ENCODE measurements at regions of chr13 and their contacts with region 1.

Region 1: DNA sequence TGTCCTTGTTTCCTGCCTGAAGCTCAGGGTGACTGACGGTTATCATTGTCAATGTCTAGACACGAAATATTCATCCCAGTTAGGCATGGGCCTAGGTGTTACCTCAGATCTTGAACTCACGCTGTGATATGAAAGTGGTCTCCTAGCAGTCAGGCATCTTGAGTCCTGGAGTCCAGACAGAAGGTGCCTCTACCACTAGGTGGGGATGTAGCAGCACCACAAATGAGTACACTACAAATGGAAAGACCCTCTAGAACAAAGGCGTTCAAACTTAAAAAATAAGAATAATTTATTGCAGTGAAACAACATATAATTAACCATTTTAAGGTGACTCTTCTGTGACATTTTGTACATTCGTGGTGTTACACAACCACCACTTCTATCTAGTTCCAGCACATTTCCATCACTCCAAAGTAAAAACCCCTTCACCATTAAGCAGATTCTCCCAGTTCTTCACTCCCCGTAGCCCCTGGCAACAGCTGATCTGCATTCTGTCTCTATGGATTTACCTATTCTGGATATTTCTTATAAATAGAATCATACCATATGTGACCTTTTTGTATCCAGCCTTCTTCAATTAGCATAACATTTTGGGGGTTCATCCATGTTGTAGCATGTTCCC is 11.9 kb upstream of the FRY start:
- DNase-seq: peak; percentile 66 to 75
- H3K4me3 ChIP-seq: no peak overlapping the region
- H3K4me1 ChIP-seq: peaks cover 10% of the 10 kb centered on the region
- H3K27me3 ChIP-seq: no peaks in the 10 kb centered on the region

Region 2: DNA sequence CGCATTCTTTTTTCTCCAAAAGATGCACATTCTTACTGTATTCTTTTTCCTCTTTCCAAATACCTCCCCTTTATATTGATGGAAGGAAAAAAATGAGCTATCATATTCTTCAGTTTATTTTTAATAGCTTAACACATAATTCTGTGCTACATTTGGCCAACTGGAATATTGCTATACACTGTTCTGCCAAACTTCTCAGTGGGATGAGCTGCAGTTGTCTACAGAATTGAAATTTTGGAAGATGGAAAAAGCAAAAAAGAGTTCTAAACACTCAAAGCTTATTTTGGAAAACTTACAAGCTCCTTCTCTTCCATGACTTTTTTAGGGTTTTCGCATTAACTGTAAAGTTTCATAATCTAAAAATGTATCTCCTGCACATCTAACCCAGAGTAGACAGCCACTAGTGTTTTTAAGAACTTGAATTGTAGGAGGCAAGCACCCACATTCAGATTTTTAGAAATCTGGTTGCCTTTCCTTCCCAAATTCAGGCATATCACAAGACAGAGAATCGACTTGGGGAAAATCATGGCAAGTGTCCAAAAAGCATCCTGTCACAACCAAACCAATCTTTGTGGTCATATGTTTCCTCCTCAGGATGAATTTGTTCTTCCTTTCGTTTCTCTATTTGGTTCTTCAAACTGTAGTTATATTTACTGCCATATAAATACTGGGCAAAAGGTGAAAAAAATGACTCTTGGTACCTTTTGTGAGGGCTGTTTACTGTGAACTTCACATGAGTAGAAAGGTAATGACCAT is 99.6 kb before region 1 on chr13:
- in situ Hi-C with region 1: no loop called
- DNase-seq: no peak
- H3K4me3 ChIP-seq: no peak overlapping the region
- H3K4me1 ChIP-seq: no peaks in the 10 kb centered on the region
- H3K27me3 ChIP-seq: no peaks in the 10 kb centered on the region; the same call in 1 of the 2 replicates

Region 3: DNA sequence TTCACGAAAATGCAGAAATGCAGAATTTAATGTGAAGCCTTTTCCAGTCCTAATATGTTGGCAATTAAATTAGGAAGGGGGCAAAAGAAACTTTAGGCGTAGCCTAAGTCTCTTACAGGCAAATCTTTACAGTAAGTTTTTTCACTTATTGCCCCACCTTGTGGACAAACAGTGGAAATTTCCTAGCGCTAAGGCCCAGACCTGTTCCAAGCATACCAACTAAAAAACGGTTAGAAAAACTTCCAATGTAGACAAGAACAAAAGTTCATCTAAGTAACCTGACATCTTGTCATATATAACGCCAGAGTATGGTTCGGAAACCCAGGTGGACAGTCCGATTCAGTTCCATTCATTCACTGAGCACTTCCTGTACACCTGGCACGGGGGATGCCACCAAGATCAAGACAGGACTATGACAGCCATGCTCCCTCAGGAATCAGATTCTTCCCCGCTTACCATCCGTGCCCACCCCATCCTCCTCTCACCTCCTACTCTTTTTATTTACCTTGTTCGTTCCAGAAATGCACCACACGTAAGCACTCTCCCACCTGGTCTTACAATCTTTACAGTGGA is 290.5 kb after region 1 on chr13:
- in situ Hi-C with region 1: loop called (anchors 5 kb)
- DNase-seq: peak; percentile 32 to 72
- H3K4me3 ChIP-seq: no peak overlapping the region
- H3K4me1 ChIP-seq: peaks cover 13% of the 10 kb centered on the region
- H3K27me3 ChIP-seq: no peaks in the 10 kb centered on the region

Region 4: DNA sequence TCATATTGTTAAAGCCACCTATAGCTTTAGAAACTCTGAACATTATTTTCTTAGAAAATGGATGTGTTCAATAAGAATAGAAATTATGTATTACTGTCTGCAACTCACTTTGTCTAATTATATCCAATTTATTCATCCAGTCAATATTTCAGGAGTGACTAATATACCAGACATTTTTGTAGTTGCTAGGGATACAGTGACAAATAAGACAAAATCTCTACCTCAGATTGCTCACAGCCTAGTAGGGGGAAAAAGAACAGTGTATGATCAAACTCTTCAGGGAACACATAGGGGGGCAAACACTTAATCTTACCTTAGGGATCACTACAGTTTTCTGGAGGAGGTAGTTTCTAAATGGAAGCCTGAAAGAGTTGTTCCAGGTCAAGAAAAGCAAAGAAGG is 304.2 kb after region 1 on chr13:
- in situ Hi-C with region 1: no loop called
- DNase-seq: no peak
- H3K4me3 ChIP-seq: no peak overlapping the region
- H3K4me1 ChIP-seq: no peaks in the 10 kb centered on the region
- H3K27me3 ChIP-seq: no peaks in the 10 kb centered on the region